ENCODE measurements at regions of chr1 and their contacts with region 1.

Region 1: GRCh38 chr1:10472220-10473144 is at the start of gene DFFA:
- DNase-seq: peak; percentile 95
- ATAC-seq: peak; percentile 86
- H3K4me3 ChIP-seq: peak within 1 kb of the TSS; percentile 74 to 83 (median 77)
- H3K27ac ChIP-seq: peak within 1 kb of the TSS; percentile 70
- H3K4me1 ChIP-seq: peaks cover 43% of the 10 kb centered on the region
- H3K27me3 ChIP-seq: no peaks in the 10 kb centered on the region; a peak in 1 of 5 replicates
- CTCF ChIP-seq: peak; percentile 40; the same call in 1 of the 2 replicates
- EP300 ChIP-seq: no peak
- POLR2A ChIP-seq: peak; percentile 66 to 78; a peak in 3 of 4 replicates
- RAD21 ChIP-seq: no peak; the same call in 1 of the 2 replicates
- total RNA-seq, gene DFFA: 33.9 and 44.6 TPM in 2 replicates

Region 2: DNA sequence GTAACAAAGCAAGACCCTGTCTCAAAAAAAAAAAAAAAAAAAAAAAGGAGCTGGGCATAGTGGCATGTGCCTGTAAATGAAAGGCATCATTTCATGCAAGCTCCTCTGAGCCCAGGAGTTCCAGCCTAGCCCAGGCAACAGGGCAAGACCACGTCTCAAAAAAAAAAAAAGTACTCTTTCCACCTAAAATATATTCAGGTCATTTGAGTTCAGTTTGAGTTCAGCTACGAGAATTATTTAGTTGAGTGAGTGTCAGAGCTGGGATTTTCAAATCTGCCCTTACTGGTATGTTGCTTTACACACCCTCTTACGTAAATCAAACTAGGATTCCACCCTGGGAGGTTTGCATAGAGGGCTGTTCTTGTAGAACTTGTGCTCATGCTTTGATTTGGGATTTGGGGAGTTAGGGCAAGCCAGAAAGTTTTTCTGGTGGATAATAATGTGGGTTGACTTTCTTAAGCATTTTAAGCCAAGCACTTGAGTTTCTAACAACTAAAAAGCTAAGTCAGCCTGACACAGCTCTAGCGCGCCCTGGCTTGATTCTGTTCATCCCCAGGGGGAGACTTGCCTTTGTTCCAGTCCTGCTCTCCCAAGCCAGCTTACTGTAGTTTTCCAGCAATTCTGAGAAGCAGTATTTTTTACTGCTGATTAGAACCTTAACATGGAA is 84.9 kb before region 1 on chr1:
- CTCF ChIA-PET with region 1: no interaction called
- POLR2A ChIA-PET with region 1: no interaction called
- in situ Hi-C with region 1: loop called (anchors 10 kb)
- intact Hi-C with region 1: no loop called
- DNase-seq: no peak
- ATAC-seq: peak; percentile 46
- H3K4me3 ChIP-seq: no peak overlapping the region; a peak in 1 of 6 replicates
- H3K27ac ChIP-seq: peak overlapping the region; percentile 74
- H3K4me1 ChIP-seq: peaks cover 51% of the 10 kb centered on the region
- H3K27me3 ChIP-seq: no peaks in the 10 kb centered on the region
- CTCF ChIP-seq: no peak
- EP300 ChIP-seq: no peak
- POLR2A ChIP-seq: no peak
- RAD21 ChIP-seq: no peak

Region 3: GRCh38 chr1:10494754-10495474 is 22.4 kb after region 1 on chr1:
- CTCF ChIA-PET with region 1: no interaction called
- POLR2A ChIA-PET with region 1: interaction called, 3 read pairs
- in situ Hi-C with region 1: no loop called
- intact Hi-C with region 1: loop called (anchors 1 kb)
- DNase-seq: peak; percentile 40
- ATAC-seq: peak; percentile 91
- H3K4me3 ChIP-seq: no peak overlapping the region
- H3K27ac ChIP-seq: no peak overlapping the region
- H3K4me1 ChIP-seq: peaks cover 19% of the 10 kb centered on the region
- H3K27me3 ChIP-seq: no peaks in the 10 kb centered on the region
- CTCF ChIP-seq: peak; percentile 87
- EP300 ChIP-seq: no peak
- POLR2A ChIP-seq: no peak
- RAD21 ChIP-seq: peak; percentile 73